Natural killer cell (primary cell): ENCODE measurements at regions of chr3 and their contacts with region 1.

Region 1: DNA sequence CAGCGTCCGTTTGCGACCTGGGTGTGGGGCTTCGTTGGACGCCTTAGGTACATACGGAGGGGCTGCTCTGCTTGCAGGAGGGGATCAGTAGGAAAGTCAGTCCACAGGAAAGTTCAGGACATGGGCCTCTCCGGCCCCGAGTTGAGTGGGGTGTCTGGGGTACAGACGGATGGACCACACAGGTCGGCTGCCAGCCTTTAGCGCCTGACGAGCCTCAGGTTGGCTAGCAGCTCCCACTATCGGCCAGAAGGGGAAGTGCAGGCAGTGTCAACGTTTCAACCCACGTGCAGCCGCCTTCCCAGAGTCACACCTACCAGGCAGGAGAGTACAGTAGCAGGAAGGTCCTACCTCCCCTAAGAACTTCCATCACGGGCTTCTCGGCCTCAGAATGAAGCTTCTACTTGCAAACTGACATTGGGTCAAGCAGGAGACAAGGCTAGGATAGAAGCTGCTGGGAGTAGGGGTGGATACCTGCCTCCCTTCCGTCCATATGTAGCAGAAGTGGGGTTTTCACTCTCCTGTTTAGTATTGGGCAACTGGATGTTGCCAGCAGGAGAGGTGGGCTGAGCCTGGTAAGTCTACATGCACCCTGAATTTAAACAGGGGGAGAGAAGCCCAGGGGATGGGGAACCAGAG is 1.8 kb upstream of the SCN5A start:
- DNase-seq: peak; percentile 40 to 88
- ATAC-seq: peak; percentile 70 to 80 (median 77)
- H3K4me3 ChIP-seq: no peak overlapping the region
- H3K4me3 Mint-ChIP-seq: no peak overlapping the region
- H3K27ac ChIP-seq: no peak overlapping the region
- H3K27ac Mint-ChIP-seq: no peak overlapping the region
- H3K4me1 ChIP-seq: peaks cover 20% of the 10 kb centered on the region
- H3K4me1 Mint-ChIP-seq: peaks cover 0 to 9% of the 10 kb centered on the region in 2 donors
- H3K27me3 ChIP-seq: peaks cover 10% of the 10 kb centered on the region
- H3K27me3 Mint-ChIP-seq: peaks cover 17 to 24% of the 10 kb centered on the region in 2 donors
- CTCF ChIP-seq: peak; percentile 77

Region 2: DNA sequence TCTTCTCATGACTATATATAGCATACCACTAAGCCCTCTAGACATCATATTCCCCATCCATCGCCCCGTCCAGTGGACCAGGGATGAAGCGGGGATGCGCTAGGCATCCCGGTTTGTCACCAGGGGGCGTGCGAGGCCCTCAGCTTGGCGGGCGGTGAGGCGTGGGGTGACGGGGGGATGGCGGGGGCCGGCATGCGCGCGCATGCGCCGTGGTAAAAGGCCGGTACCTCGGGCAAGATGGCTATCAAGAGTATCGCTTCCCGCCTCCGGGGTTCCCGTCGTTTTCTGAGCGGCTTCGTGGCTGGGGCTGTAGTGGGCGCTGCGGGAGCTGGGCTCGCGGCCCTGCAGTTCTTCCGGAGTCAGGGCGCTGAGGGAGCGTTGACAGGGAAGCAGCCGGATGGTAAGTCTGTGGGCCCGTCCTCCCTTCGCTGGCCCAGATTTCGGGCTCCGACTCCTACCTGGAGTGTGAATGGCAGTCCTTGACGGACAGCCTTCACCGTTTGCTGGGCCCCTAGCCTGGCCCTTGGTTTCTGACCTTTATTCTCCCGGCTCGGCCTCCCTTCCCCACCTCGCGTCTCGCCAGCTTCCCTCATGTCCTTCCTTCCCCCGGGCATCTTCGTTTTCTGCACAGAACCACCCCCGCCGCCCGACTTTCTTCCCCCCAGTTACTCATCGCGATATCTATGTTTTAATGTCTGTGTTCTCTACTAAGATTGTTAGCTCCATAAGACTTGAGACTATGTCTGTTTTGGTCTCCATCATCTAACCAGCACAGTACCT is 155.0 kb before region 1 on chr3 and contains the start of gene EXOG:
- intact Hi-C with region 1: loop called (anchors 10 kb)
- DNase-seq: peak; percentile 87 to 97
- ATAC-seq: peak; percentile 96 to 97 (median 97)
- H3K4me3 ChIP-seq: peak within 1 kb of the TSS; percentile 74
- H3K4me3 Mint-ChIP-seq: peak within 1 kb of the TSS; percentile 96
- H3K27ac ChIP-seq: peak within 1 kb of the TSS; percentile 58
- H3K27ac Mint-ChIP-seq: peak within 1 kb of the TSS; percentile 84 to 88
- H3K4me1 ChIP-seq: peaks cover 7% of the 10 kb centered on the region
- H3K4me1 Mint-ChIP-seq: peaks cover 21 to 25% of the 10 kb centered on the region in 2 donors
- H3K27me3 ChIP-seq: no peaks in the 10 kb centered on the region
- H3K27me3 Mint-ChIP-seq: no peaks in the 10 kb centered on the region
- CTCF ChIP-seq: peak; percentile 91
- total RNA-seq, gene EXOG: 27.3 to 34.5 (median 30.5) TPM

Region 3: DNA sequence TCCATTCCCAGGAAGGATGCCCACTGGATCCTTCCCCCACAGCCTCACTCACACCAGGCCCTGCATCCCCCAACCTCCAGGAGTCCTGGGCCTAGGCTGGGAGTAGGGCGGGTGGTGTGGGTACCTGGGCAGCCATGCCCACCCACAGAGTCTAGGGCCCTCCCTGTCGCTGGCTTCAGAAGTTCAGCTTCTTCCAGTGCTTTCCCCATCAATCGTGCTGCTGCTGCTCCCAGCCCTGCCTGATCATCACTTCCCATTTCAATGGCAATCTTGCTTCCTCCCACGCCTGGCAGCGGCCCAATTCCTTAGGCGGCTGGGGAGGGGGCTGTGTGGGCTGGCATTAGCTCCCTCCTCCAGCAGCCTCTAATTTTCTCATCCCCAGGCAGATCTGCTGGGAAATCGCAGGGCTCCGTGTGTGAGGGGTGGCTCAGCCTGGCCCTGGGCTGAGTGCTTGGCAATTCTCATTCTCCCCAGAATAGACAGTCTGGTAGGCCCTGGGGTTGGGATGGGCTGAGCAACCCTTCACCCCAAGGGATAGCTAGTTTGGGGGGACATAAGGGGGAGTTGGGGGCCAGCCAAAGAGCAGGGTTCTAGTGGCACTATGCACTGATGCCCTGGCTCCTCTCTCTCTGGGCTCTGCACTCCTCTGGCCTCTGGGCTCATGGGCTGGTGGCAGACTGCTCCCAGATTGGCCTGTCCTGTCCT is 68.2 kb before region 1 on chr3:
- intact Hi-C with region 1: no loop called
- DNase-seq: peak in 1 of 2 donors; percentile 5
- ATAC-seq: no peak
- H3K4me3 ChIP-seq: no peak overlapping the region
- H3K4me3 Mint-ChIP-seq: no peak overlapping the region
- H3K27ac ChIP-seq: no peak overlapping the region
- H3K27ac Mint-ChIP-seq: no peak overlapping the region
- H3K4me1 ChIP-seq: no peaks in the 10 kb centered on the region
- H3K4me1 Mint-ChIP-seq: no peaks in the 10 kb centered on the region
- H3K27me3 ChIP-seq: no peaks in the 10 kb centered on the region
- H3K27me3 Mint-ChIP-seq: no peaks in the 10 kb centered on the region
- CTCF ChIP-seq: no peak

Region 4: GRCh38 chr3:39216176-39216790 is 565.0 kb after region 1 on chr3:
- intact Hi-C with region 1: no loop called
- DNase-seq: no peak
- ATAC-seq: peak; percentile 48 to 59 (median 48)
- H3K4me3 ChIP-seq: no peak overlapping the region
- H3K4me3 Mint-ChIP-seq: peak overlapping the region; percentile 8
- H3K27ac ChIP-seq: no peak overlapping the region
- H3K27ac Mint-ChIP-seq: peak overlapping the region; percentile 0 to 73
- H3K4me1 ChIP-seq: peaks cover 35% of the 10 kb centered on the region
- H3K4me1 Mint-ChIP-seq: peaks cover 66 to 75% of the 10 kb centered on the region in 2 donors
- H3K27me3 ChIP-seq: no peaks in the 10 kb centered on the region
- H3K27me3 Mint-ChIP-seq: no peaks in the 10 kb centered on the region
- CTCF ChIP-seq: no peak